Heart right ventricle (tissue), 16 donors: ENCODE measurements at regions of chr9 and their contacts with region 1.

Region 1: DNA sequence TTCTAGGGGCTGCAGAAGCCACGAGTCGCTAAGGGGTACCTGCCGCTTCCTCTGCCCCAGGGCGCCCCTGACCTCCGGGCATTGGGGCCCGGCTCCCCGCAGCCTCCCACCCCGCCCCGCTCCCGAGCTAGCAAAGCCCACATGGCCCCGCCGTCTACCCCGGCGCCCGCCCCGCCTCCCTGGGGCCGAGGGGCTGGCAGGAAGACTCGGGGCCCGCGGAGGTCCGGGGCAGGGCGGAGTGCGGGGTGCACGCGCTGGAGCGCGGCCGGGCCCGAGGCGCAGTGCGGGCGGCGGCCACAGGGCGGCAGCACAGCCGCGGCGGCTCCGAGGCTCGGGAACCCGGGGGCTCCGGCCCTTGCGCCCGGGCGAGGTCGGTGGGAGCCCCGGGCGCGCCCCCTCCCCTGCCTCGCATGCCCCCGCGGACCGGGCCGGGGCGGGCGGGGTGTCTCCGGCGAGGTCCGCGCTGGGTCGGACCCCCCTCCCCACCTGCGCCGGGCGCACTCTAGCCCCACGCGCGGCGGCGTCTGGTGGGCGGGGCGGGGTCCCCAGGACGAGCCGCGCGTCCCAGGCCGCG is 6.7 kb downstream of the NRARP start:
- DNase-seq: peak; percentile 19 to 55
- ATAC-seq: peak in 4 of 8 donors; percentile 19 to 43 (median 28)
- H3K4me3 ChIP-seq: peak overlapping the region in 9 of 10 donors; percentile 38 to 87 (median 53)
- H3K27ac ChIP-seq: peak overlapping the region in 9 of 10 donors; percentile 80 to 94 (median 89)
- H3K4me1 ChIP-seq: peaks cover 5 to 57% (median 37%) of the 10 kb centered on the region in 9 donors
- H3K27me3 ChIP-seq: peaks cover 0 to 66% (median 16%) of the 10 kb centered on the region in 7 donors
- CTCF ChIP-seq: peak; percentile 33 to 90 (median 63)

Region 2: GRCh38 chr9:137205126-137206069 is 89.9 kb before region 1 on chr9 and contains the starts of genes NDOR1 and TMEM203:
- intact Hi-C with region 1: no loop called
- DNase-seq: peak; percentile 94
- ATAC-seq: peak; percentile 58 to 74 (median 66)
- H3K4me3 ChIP-seq: peak within 1 kb of the TSS; percentile 31 to 96 (median 86)
- H3K27ac ChIP-seq: peak within 1 kb of the TSS in 9 of 10 donors; percentile 75 to 94 (median 89)
- H3K4me1 ChIP-seq: peaks cover 20 to 58% (median 54%) of the 10 kb centered on the region in 9 donors
- H3K27me3 ChIP-seq: no peaks in the 10 kb centered on the region
- CTCF ChIP-seq: no peak
- total RNA-seq, gene NDOR1: 4.6 to 10.1 (median 5.4) TPM
- total RNA-seq, gene TMEM203: 36.4 to 46.2 (median 41.7) TPM

Region 3: GRCh38 chr9:137390543-137391410 is 95.5 kb after region 1 on chr9:
- intact Hi-C with region 1: loop called in 1 of 10 experiments (anchors 5 kb)
- DNase-seq: no peak
- ATAC-seq: peak in 6 of 8 donors; percentile 7 to 29 (median 14)
- H3K4me3 ChIP-seq: peak overlapping the region in 4 of 10 donors; percentile 7 to 23 (median 10)
- H3K27ac ChIP-seq: peak overlapping the region; percentile 58 to 92 (median 80)
- H3K4me1 ChIP-seq: peaks cover 0 to 45% (median 23%) of the 10 kb centered on the region in 9 donors
- H3K27me3 ChIP-seq: no peaks in the 10 kb centered on the region
- CTCF ChIP-seq: no peak

Region 4: DNA sequence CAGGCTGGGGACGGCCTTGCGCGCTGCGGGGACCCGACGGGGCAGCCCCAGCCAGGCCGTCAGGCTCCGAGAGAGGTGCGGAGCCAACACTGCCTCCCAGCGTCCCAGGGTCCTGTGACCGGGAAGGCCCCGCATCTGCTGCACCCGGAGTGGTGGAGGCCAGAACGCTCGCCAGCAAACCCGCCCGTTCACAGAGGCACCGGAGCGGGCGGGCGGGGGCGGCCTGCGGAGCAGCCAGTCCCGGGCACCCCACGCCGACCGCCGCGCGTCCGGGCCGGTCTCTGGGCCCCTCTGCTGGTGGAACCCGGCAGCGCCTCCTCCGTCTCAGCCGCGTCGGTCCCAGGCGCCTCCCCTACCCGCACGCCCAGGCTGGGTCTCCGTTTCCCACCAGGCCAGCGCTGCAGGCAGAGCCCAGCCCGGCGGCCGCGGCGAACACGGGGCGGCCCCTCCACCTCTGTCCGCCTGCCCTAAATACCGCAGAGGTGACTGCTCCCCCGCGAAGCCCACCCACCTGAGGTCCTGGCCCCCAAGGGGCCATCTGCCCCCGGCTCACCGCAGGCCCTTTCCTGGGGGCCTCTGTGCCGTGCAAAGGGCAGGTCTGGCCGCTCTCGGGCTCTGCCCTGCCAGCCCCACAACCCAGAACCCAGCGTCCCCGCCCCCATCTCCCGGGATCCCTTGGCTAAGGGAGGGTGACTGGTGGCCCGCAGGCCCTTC is 111.7 kb after region 1 on chr9:
- intact Hi-C with region 1: loop called (anchors 2 to 5 kb)
- DNase-seq: peak; percentile 71 to 79
- ATAC-seq: peak; percentile 82 to 88 (median 87)
- H3K4me3 ChIP-seq: peak overlapping the region in 9 of 10 donors; percentile 25 to 57 (median 51)
- H3K27ac ChIP-seq: peak overlapping the region in 9 of 10 donors; percentile 42 to 85 (median 79)
- H3K4me1 ChIP-seq: peaks cover 17 to 49% (median 34%) of the 10 kb centered on the region in 9 donors
- H3K27me3 ChIP-seq: peaks cover 0 to 22% (median 0%) of the 10 kb centered on the region in 7 donors
- CTCF ChIP-seq: peak; percentile 75 to 96 (median 88)

Region 5: DNA sequence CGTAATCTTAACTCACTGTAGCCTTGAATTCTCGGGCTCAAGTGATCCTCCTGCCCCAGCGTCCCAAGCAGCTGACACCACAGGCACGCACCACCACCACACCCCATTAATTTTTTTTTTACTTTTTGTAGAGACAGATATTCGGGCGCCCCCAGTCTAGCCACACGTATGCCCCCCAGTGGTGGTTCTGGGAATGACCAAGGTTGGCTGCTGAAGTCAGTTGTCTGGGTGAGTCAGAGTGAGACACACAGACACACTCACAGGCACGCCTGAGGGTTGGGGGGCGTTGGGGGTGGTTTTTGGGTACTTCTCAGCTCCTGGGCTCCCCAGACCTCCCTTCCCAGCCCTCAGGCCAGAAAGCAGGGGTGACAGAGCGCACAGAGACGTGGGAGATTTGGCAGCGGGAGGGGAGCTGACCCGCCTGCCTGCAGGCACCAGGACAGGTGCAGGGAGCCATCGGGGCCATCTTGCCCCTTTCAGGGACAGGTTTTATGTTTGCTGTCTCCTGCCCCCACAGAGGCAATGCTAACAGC is 150.0 kb after region 1 on chr9:
- intact Hi-C with region 1: loop called in 1 of 10 experiments (anchors 10 kb)
- DNase-seq: peak; percentile 77
- ATAC-seq: peak; percentile 51 to 84 (median 70)
- H3K4me3 ChIP-seq: no peak overlapping the region
- H3K27ac ChIP-seq: no peak overlapping the region
- H3K4me1 ChIP-seq: peaks cover 0 to 21% (median 5%) of the 10 kb centered on the region in 9 donors
- H3K27me3 ChIP-seq: peaks cover 0 to 32% (median 20%) of the 10 kb centered on the region in 7 donors
- CTCF ChIP-seq: peak; percentile 74 to 86 (median 83)

Region 6: DNA sequence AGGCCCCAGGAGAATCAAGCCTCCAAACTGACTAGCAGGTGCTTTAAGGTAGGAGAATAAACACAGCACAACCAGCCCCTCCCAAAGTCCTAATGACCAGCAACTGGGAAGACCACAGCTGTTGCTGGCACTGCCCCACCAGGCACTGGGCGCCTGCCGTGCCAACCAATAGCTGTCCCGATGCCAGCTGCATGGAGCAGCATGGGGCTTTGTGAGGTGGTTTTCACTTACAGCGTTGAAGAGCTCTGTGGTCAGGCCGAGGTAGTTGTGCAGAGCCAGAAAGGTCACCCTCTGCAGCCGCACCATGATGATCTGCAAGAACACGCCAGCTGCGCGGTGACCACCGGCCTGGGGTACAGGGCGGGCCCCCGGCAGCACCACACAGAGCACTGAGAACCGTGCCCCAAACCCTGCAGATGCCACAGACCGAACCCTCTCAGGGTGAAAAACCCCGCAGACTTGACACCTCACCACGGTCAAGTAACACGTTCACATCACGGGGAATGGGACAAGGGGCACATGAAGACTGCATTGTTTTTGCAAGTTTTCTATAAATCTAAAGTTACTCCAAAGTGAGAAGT is 226.2 kb after region 1 on chr9:
- intact Hi-C with region 1: loop called in 7 of 10 experiments (anchors 5 to 10 kb)
- DNase-seq: no peak
- ATAC-seq: no peak
- H3K4me3 ChIP-seq: no peak overlapping the region
- H3K27ac ChIP-seq: no peak overlapping the region
- H3K4me1 ChIP-seq: peaks cover 0 to 4% (median 0%) of the 10 kb centered on the region in 9 donors
- H3K27me3 ChIP-seq: no peaks in the 10 kb centered on the region
- CTCF ChIP-seq: no peak